Activated T-helper 1 cell treated with anti-CD3 and anti-CD28 coated beads, Interleukin-12 subunit alpha, Interleukin-12 subunit beta, Interleukin-2, Interleukin-4 antibody, amounts not matched to agents 30 ng/mL and 10 ng/mL and 1 ng/mL, durations not matched to agents 14 hours and 24 hours and 36 hours (primary cell): ENCODE measurements at regions of chr6 and their contacts with region 1.

Region 1: DNA sequence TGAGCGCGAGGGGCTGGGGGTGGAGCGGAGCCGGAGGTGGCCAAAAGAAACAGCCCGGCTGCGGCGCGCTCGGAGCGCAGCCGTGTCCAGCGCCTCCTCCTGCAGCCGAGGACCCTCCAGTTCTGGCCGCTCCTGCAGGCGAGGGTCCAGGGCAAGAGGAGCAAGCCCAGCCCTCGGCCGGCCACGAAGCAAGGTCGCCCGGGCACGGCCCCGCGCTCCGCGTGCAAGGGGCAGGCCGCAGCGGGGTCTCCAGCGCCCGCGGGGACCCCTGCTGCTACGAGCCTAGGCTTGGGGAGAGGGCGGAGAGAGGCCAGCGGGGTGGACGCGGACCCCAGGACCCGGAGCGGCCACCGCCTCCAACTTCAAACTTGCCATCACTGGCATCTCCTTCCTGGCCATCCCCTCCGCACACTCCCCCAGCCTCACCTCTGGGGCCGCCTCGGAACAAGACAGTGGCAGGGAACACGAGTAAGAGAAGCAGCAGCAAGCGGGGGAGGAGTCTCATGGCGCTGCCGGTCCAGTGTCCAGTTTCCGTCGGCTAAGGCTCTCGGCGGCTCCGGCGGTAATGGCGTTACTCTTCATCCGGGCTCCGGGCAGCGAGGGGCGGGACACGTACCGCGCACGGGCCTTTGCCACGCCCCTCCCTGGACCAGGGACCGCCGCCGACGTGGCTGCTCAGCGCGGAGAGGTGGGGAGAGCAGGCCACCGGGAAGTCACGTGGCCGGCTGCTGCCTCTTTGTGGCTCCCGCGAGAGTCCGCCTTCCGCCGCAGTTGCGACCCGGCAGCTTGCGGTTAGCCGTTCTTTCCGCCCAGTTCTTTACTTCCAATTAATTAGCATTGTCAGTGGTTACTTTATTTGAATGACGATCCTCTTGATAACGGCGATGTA is at the start of gene SSR1:
- DNase-seq: peak; percentile 95
- H3K4me3 Mint-ChIP-seq: peak within 1 kb of the TSS; percentile 98
- H3K27ac Mint-ChIP-seq: peak within 1 kb of the TSS; percentile 94
- H3K4me1 Mint-ChIP-seq: peaks cover 35% of the 10 kb centered on the region
- H3K27me3 Mint-ChIP-seq: no peaks in the 10 kb centered on the region
- total RNA-seq, gene SSR1: 160 and 168 TPM in 2 replicates

Region 2: DNA sequence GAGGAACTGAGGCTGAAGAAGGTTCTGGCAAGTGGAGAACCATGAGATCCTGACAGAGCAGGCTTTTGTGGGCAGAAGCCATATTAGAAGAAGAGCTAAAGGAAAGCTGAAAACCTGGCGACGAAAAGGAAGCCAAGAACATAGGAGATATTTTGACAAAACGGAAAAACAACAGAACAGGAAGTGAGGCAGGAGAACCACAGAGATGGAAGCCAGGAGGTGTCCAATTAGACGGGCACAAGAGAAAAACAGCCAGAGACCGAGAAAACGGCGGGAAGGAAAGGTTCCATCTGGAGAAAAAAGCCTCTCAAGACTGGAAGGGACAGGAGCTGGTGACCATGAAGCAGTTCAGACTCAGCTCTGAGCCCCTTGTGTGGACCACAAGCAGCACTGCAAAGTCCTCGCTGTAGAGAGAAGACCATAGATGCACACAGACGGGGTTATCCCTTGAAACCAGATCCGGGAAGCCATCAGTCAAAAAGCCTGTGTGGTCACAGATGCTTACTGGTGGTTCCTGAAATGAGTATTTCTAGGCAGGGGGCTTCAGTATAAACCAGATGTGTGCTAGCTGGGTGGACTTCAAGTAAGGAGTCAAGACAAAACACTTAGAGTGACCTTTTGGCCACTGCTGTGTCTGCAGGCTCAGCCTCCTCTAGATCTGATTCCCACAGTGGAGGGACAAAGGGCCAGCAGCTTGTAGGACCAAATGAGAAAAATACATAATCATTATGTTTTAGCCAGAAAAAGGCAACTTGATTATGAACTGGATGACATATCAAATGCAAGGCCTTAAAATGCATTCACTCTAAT is 30.6 kb before region 1 on chr6:
- intact Hi-C with region 1: loop called (anchors 2 kb)
- DNase-seq: no peak
- H3K4me3 Mint-ChIP-seq: peak overlapping the region; percentile 38
- H3K27ac Mint-ChIP-seq: peak overlapping the region; percentile 82
- H3K4me1 Mint-ChIP-seq: peaks cover 18% of the 10 kb centered on the region
- H3K27me3 Mint-ChIP-seq: no peaks in the 10 kb centered on the region

Region 3: GRCh38 chr6:7295916-7296315 is 16.9 kb before region 1 on chr6:
- intact Hi-C with region 1: loop called (anchors 2 kb)
- DNase-seq: no peak
- H3K4me3 Mint-ChIP-seq: no peak overlapping the region
- H3K27ac Mint-ChIP-seq: no peak overlapping the region
- H3K4me1 Mint-ChIP-seq: peaks cover 13% of the 10 kb centered on the region
- H3K27me3 Mint-ChIP-seq: no peaks in the 10 kb centered on the region

Region 4: DNA sequence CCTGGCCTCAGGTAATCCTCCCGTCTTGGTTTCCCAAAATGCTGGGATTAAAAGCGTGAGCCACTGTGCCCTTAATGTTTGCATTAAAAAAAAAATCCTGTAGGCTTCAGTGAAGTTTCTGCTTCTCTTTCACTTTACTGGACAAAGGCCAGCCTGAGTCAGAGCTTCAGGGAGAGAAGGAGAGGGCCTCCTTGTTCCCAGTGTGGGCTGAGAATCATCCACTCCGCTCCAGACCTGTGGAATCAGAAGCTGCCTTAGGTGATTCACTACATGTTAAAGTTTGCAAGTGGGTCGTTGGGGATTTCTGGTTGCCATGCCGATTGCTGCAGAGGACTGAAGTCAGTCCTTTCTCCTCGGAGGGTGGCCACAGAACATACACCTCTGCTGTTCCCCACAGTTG is 902.8 kb after region 1 on chr6:
- intact Hi-C with region 1: no loop called
- DNase-seq: no peak
- H3K4me3 Mint-ChIP-seq: no peak overlapping the region
- H3K27ac Mint-ChIP-seq: no peak overlapping the region
- H3K4me1 Mint-ChIP-seq: no peaks in the 10 kb centered on the region
- H3K27me3 Mint-ChIP-seq: peaks cover 5% of the 10 kb centered on the region

Region 5: DNA sequence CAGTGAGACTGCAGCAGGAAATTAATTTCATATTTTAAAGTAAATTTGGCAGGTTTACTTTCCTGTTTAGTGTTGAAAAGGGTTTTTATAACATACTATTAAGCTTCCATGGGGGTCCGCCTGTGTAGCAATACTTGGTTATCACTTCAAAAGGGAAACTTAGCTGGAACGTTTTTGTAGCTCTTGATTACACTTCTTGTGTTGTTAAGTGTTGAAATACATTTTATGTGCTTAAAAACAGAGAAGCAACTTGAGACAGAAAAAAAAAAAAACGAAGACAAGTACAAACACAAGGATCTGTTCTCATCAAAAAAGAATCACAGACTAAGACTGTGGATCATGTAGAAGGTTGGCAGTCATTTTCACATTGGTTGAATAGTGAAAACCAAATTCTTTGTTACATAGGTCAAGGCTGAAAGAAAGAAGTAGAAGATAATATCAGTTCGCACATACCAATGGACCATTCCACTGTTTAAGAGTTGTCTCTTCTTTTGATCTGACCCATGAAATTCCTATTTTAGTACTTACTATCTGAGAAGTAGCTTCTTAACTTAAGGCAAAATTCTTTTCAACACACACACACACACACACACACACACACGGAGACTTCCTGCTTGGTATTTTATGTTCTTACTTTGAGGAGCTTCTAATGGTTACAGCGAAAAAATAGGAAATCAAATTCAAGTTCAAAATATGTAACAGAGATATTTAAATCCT is 1236.4 kb after region 1 on chr6:
- intact Hi-C with region 1: no loop called
- DNase-seq: no peak
- H3K4me3 Mint-ChIP-seq: no peak overlapping the region
- H3K27ac Mint-ChIP-seq: no peak overlapping the region
- H3K4me1 Mint-ChIP-seq: no peaks in the 10 kb centered on the region
- H3K27me3 Mint-ChIP-seq: no peaks in the 10 kb centered on the region